Pancreas (tissue), 10 donors: ENCODE measurements at regions of chr2 and their contacts with region 1.

Region 1: DNA sequence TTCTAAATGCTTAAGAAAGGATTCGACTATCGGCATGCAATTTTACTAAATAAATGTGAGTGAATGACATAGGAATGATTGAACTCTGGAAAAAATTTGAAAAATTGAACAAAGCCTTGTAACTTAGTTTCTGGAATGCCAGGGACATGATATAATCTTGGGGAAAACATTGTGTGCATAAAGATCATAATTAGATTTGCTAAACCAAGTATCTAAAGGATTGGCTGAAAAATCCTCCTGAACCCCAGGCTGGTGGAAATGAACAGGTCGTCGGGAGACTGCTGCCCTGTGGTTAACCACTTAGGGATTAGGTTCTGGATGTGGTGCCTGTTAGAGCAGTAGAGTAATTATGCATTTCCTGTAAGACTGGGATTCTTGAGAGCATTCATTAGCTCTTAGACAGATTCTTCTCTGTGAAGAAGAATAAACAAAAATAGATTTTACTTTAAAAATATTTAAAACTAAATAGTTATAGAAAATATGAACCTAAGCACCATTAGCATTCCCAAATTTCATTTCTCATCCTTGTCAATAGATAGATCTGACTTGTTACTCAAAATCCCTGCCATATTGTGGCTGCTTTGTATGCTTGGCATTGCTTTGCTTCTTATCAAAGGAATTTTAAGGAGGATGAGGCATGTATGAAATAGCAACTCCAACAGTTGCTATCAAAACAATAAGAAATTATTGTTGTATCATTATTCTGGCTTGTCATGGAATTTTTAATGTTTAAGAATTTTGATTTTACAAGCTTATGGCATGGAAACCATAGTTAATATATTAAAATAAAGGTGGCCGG is 55.9 kb downstream of the LYPD6B start:
- DNase-seq: no peak
- ATAC-seq: no peak
- H3K4me3 ChIP-seq: no peak overlapping the region
- H3K27ac ChIP-seq: no peak overlapping the region
- H3K4me1 ChIP-seq: peaks cover 3 to 6% (median 4%) of the 10 kb centered on the region in 3 donors
- H3K27me3 ChIP-seq: no peaks in the 10 kb centered on the region
- CTCF ChIP-seq: no peak

Region 2: GRCh38 chr2:149313512-149313972 is 219.1 kb after region 1 on chr2:
- intact Hi-C with region 1: loop called in 1 of 3 experiments (anchors 5 kb)
- DNase-seq: peak in 3 of 6 donors; percentile 26 to 51 (median 32)
- ATAC-seq: peak; percentile 83 to 98 (median 96)
- H3K4me3 ChIP-seq: no peak overlapping the region
- H3K27ac ChIP-seq: no peak overlapping the region
- H3K4me1 ChIP-seq: no peaks in the 10 kb centered on the region
- H3K27me3 ChIP-seq: no peaks in the 10 kb centered on the region
- CTCF ChIP-seq: peak; percentile 72 to 79 (median 74)